K562 (cell line): ENCODE measurements at regions of chr1 and their contacts with region 1.

Region 1: GRCh38 chr1:180252638-180253536 is 22.8 kb downstream of the LHX4 start:
- DNase-seq: peak; percentile 81 to 88 (median 86)
- ATAC-seq: peak; percentile 82
- H3K4me3 ChIP-seq: no peak overlapping the region
- H3K27ac ChIP-seq: no peak overlapping the region
- H3K4me1 ChIP-seq: peaks cover 0 to 21% of the 10 kb centered on the region in 2 experiments; a peak in 3 of 5 replicates
- H3K27me3 ChIP-seq: peaks cover 17 to 47% of the 10 kb centered on the region in 2 experiments; a peak in 4 of 5 replicates
- CTCF ChIP-seq: peak; percentile 96 to 99 (median 98)
- EP300 ChIP-seq: no peak
- POLR2A ChIP-seq: no peak
- RAD21 ChIP-seq: peak; percentile 87 to 97

Region 2: GRCh38 chr1:180415985-180416633 is 163.2 kb after region 1 on chr1:
- CTCF ChIA-PET with region 1: interaction called, 41 read pairs
- POLR2A ChIA-PET with region 1: no interaction called
- in situ Hi-C with region 1: loop called (anchors 5 kb)
- intact Hi-C with region 1: loop called (anchors 1 kb)
- DNase-seq: peak; percentile 47 to 58 (median 48)
- ATAC-seq: peak; percentile 94
- H3K4me3 ChIP-seq: no peak overlapping the region
- H3K27ac ChIP-seq: no peak overlapping the region
- H3K4me1 ChIP-seq: no peaks in the 10 kb centered on the region
- H3K27me3 ChIP-seq: no peaks in the 10 kb centered on the region
- CTCF ChIP-seq: peak; percentile 48 to 88 (median 58); a peak in 5 of 6 replicates
- EP300 ChIP-seq: no peak
- POLR2A ChIP-seq: no peak
- RAD21 ChIP-seq: peak; percentile 62 to 88

Region 3: GRCh38 chr1:180482425-180483275 is 229.8 kb after region 1 on chr1:
- CTCF ChIA-PET with region 1: interaction called, 20 read pairs
- POLR2A ChIA-PET with region 1: no interaction called
- in situ Hi-C with region 1: loop called (anchors 5 kb)
- intact Hi-C with region 1: loop called (anchors 1 kb)
- DNase-seq: peak; percentile 53 to 79 (median 54)
- ATAC-seq: peak; percentile 78
- H3K4me3 ChIP-seq: no peak overlapping the region
- H3K27ac ChIP-seq: no peak overlapping the region
- H3K4me1 ChIP-seq: no peaks in the 10 kb centered on the region
- H3K27me3 ChIP-seq: no peaks in the 10 kb centered on the region
- CTCF ChIP-seq: peak; percentile 64 to 82 (median 73); a peak in 5 of 6 replicates
- EP300 ChIP-seq: no peak
- POLR2A ChIP-seq: no peak
- RAD21 ChIP-seq: peak; percentile 49 to 64; a peak in 3 of 4 replicates